ENCODE measurements at regions of chr12 and their contacts with region 1.

Region 1: GRCh38 chr12:122244565-122245371 is 18.9 kb upstream of the DIABLO start:
- DNase-seq: no peak
- H3K4me3 ChIP-seq: no peak overlapping the region
- H3K27ac ChIP-seq: no peak overlapping the region
- H3K4me1 ChIP-seq: no peaks in the 10 kb centered on the region
- H3K27me3 ChIP-seq: no peaks in the 10 kb centered on the region
- CTCF ChIP-seq: no peak
- EP300 ChIP-seq: no peak
- POLR2A ChIP-seq: no peak

Region 2: DNA sequence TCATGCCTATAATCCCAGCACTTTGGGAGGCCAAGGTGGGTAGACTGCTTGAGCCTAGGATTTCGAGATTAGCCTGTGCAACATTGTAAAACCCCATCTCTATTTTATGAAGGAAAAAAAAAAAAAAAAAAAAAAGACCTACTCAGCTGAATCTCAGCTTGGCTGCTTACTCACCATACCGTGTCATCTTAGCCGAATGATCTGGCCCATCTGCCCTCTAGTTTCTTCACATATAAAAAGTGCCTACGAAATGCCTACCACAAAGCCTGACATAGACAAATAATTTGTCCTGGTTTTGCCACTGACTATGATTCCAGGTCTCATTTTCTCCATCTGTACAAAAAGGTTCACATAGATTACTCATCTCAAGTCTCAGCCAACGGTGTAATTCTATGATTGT is 29.0 kb before region 1 on chr12:
- intact Hi-C with region 1: loop called in 1 of 4 experiments (anchors 2 kb)
- DNase-seq: no peak
- H3K4me3 ChIP-seq: no peak overlapping the region
- H3K27ac ChIP-seq: no peak overlapping the region
- H3K4me1 ChIP-seq: no peaks in the 10 kb centered on the region
- H3K27me3 ChIP-seq: no peaks in the 10 kb centered on the region
- CTCF ChIP-seq: no peak
- EP300 ChIP-seq: no peak
- POLR2A ChIP-seq: no peak

Region 3: GRCh38 chr12:122356192-122356635 is 111.4 kb after region 1 on chr12:
- intact Hi-C with region 1: no loop called
- DNase-seq: peak in 3 of 5 donors; percentile 18 to 47 (median 43)
- H3K4me3 ChIP-seq: no peak overlapping the region
- H3K27ac ChIP-seq: no peak overlapping the region
- H3K4me1 ChIP-seq: no peaks in the 10 kb centered on the region
- H3K27me3 ChIP-seq: no peaks in the 10 kb centered on the region
- CTCF ChIP-seq: peak; percentile 51 to 65 (median 62)
- EP300 ChIP-seq: no peak
- POLR2A ChIP-seq: no peak